ENCODE measurements at regions of chr1 and their contacts with region 1.

Region 1: DNA sequence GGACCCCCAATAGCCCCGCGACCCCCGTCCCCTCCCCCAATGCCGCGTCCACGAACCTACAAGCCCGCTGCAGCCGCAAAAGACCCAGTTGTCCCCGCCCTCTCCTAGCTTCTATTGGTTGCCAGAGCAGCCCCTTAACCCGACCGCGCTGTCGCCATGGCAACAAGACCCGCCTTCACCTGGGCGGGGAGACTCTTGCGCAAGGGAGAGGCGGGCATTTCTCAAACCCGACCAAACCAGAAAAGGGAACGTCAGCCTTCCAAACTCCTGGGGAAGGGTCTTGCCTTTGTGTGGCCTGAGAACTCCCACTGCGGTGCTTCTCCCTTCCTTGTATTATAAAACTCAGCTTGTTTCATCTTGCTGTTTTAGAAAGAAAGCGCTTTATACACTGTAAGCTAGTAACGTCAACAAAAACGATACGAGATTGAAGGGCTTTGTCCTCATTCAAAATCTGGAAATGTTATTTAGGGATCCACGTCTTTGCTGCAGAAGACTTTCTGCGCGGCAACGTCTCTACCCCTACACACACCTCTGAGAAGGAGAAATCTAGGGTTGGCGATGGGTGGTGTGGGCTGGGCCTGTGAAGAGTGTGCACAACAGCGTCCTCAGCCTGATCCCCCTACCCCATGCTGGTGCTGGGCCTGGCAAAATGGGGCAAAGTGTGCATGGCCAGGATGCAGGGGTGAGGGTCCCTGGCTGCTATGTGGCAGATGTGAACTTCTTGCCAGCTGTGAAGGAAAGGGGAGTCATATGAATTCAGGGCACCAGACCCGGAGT is at the start of gene TMEM9:
- DNase-seq: peak; percentile 97 to 100 (median 99)
- ATAC-seq: peak; percentile 97
- H3K4me3 ChIP-seq: peak within 1 kb of the TSS; percentile 84
- H3K4me3 Mint-ChIP-seq: peak within 1 kb of the TSS; percentile 91
- H3K27ac ChIP-seq: peak within 1 kb of the TSS in 1 of 2 donors; percentile 47
- H3K27ac Mint-ChIP-seq: peak within 1 kb of the TSS; percentile 76
- H3K4me1 ChIP-seq: peaks cover 18% of the 10 kb centered on the region
- H3K4me1 Mint-ChIP-seq: peaks cover 32% of the 10 kb centered on the region
- H3K27me3 ChIP-seq: no peaks in the 10 kb centered on the region
- H3K27me3 Mint-ChIP-seq: peaks cover 10% of the 10 kb centered on the region
- CTCF ChIP-seq: no peak
- total RNA-seq, gene TMEM9: 15.7 to 16.5 TPM

Region 2: DNA sequence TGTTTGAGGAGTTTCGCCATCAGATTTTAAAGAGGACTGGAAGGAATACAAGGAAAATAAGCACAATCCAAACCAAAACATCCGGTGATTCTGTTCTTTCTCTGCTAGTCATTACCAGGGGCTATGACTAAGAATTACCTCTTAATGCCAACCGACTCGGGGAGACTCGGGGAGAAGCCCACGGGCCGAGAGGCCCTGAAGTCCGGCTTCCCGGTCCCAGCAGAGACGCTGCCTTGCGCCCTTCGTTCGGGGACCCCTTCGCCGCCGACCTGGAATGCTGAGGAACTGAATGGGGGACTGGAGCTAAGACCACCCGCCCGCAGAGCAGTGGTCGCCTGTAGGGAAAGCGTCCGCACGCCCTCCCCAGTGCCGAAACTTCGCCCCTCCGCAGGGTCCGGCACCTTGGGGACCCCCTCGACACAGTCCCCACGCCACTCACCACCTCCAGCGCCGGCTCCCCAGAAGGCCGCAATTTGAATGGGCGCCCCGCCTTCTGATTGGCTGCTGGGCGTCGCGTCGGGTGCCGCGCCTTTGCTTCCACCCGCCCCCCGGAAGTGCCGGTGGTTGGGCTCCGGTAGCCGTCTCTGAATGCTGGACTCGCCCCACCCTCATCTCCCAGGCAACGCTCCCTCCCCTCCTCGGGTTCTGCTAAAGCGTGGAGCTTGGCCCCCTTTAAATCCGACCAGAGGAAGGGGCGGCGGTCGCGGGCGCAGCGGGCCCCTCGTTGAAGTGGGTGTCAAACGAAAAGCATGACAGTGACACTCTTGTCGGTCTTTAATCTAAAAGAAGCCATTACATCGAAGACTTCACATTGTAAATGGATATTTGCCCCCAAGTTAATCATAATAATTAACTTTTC is 534.1 kb before region 1 on chr1 and contains the start of gene KIF14:
- CTCF ChIA-PET with region 1: no interaction called
- POLR2A ChIA-PET with region 1: no interaction called
- intact Hi-C with region 1: loop called in 1 of 2 experiments (anchors 5 kb)
- DNase-seq: peak; percentile 78 to 95 (median 88)
- ATAC-seq: peak; percentile 95
- H3K4me3 ChIP-seq: peak within 1 kb of the TSS; percentile 83
- H3K4me3 Mint-ChIP-seq: peak within 1 kb of the TSS; percentile 98
- H3K27ac ChIP-seq: peak within 1 kb of the TSS; percentile 23 to 52
- H3K27ac Mint-ChIP-seq: peak within 1 kb of the TSS; percentile 90
- H3K4me1 ChIP-seq: peaks cover 19% of the 10 kb centered on the region
- H3K4me1 Mint-ChIP-seq: peaks cover 31% of the 10 kb centered on the region
- H3K27me3 ChIP-seq: no peaks in the 10 kb centered on the region
- H3K27me3 Mint-ChIP-seq: no peaks in the 10 kb centered on the region
- CTCF ChIP-seq: no peak
- total RNA-seq, gene KIF14: 0.11 TPM

Region 3: DNA sequence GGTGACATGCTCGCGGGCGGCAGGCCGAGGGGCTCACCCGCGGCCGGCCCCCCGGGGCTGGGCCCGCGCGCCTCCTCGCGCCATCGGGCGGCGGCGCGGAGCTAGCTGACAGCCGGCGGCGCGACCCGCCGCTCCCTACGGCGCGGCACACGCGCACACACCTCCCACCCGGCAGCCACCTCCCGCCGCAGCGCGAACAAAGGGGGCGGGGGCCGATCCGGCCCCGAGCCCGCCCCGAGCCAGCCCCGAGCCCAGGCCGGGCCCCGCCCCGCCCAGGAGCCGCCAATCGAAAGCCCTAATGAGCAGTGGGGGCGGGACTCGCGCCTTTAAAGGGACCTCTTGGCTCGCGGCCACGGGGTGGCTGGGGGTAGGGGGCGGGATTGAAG is 131.1 kb before region 1 on chr1 and contains the start of gene KIF21B:
- CTCF ChIA-PET with region 1: no interaction called
- POLR2A ChIA-PET with region 1: interaction called, 3 read pairs
- intact Hi-C with region 1: loop called in 1 of 2 experiments (anchors 5 kb)
- DNase-seq: peak; percentile 79 to 95 (median 90)
- ATAC-seq: peak; percentile 78
- H3K4me3 ChIP-seq: peak within 1 kb of the TSS; percentile 67
- H3K4me3 Mint-ChIP-seq: peak within 1 kb of the TSS; percentile 94
- H3K27ac ChIP-seq: peak within 1 kb of the TSS; percentile 80 to 90
- H3K27ac Mint-ChIP-seq: peak within 1 kb of the TSS; percentile 90
- H3K4me1 ChIP-seq: peaks cover 72% of the 10 kb centered on the region
- H3K4me1 Mint-ChIP-seq: peaks cover 77% of the 10 kb centered on the region
- H3K27me3 ChIP-seq: no peaks in the 10 kb centered on the region
- H3K27me3 Mint-ChIP-seq: no peaks in the 10 kb centered on the region
- CTCF ChIP-seq: no peak
- total RNA-seq, gene KIF21B: 64.5 to 65.4 TPM

Region 4: GRCh38 chr1:201170533-201171062 is 16.0 kb after region 1 on chr1:
- CTCF ChIA-PET with region 1: interaction called, 6 read pairs
- POLR2A ChIA-PET with region 1: interaction called, 12 read pairs
- intact Hi-C with region 1: no loop called
- DNase-seq: peak; percentile 43 to 89 (median 54)
- ATAC-seq: peak; percentile 84
- H3K4me3 ChIP-seq: peak overlapping the region; percentile 61
- H3K4me3 Mint-ChIP-seq: peak overlapping the region; percentile 96
- H3K27ac ChIP-seq: no peak overlapping the region
- H3K27ac Mint-ChIP-seq: peak overlapping the region; percentile 87
- H3K4me1 ChIP-seq: peaks cover 15% of the 10 kb centered on the region
- H3K4me1 Mint-ChIP-seq: peaks cover 23% of the 10 kb centered on the region
- H3K27me3 ChIP-seq: peaks cover 0 to 3% of the 10 kb centered on the region in 2 experiments
- H3K27me3 Mint-ChIP-seq: peaks cover 21% of the 10 kb centered on the region
- CTCF ChIP-seq: no peak

Region 5: GRCh38 chr1:201224666-201225370 is 70.2 kb after region 1 on chr1:
- CTCF ChIA-PET with region 1: interaction called, 6 read pairs
- POLR2A ChIA-PET with region 1: no interaction called
- intact Hi-C with region 1: loop called (anchors 2 to 5 kb)
- DNase-seq: peak in 1 of 14 experiments; percentile 27
- ATAC-seq: no peak
- H3K4me3 ChIP-seq: no peak overlapping the region
- H3K4me3 Mint-ChIP-seq: no peak overlapping the region
- H3K27ac ChIP-seq: no peak overlapping the region
- H3K27ac Mint-ChIP-seq: no peak overlapping the region
- H3K4me1 ChIP-seq: no peaks in the 10 kb centered on the region
- H3K4me1 Mint-ChIP-seq: no peaks in the 10 kb centered on the region
- H3K27me3 ChIP-seq: peaks cover 2 to 11% of the 10 kb centered on the region in 2 experiments
- H3K27me3 Mint-ChIP-seq: peaks cover 13% of the 10 kb centered on the region
- CTCF ChIP-seq: no peak

Region 6: DNA sequence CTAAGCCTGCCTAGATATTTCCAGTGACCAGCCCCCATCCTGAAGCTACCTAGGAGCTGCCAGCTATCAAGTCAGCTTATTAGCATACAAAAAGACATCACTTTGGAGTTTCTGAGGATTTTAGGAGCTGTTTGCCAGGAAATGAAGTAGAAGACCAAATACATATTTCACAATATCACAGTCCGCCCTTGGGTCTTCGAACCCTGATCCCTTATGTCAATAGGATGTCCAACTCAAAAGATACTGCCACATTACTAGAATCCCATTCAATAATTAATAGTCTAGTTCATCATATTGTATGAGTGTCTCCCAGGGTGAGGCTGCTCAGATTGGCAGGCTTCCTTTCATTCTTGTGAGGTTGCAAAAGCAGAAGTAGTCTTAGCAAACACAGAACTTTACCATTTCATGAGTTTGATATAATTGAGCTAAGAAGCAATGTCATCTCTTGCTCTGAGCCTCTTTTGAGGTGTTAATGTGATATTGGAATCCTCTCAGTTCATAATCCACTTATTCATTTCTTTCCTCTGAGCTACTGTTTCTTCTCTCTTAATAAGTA is 688.0 kb after region 1 on chr1:
- CTCF ChIA-PET with region 1: no interaction called
- POLR2A ChIA-PET with region 1: no interaction called
- intact Hi-C with region 1: loop called in 1 of 2 experiments (anchors 10 kb)
- DNase-seq: no peak
- ATAC-seq: no peak
- H3K4me3 ChIP-seq: no peak overlapping the region
- H3K4me3 Mint-ChIP-seq: no peak overlapping the region
- H3K27ac ChIP-seq: no peak overlapping the region
- H3K27ac Mint-ChIP-seq: peak overlapping the region; percentile 43
- H3K4me1 ChIP-seq: no peaks in the 10 kb centered on the region
- H3K4me1 Mint-ChIP-seq: peaks cover 49% of the 10 kb centered on the region
- H3K27me3 ChIP-seq: no peaks in the 10 kb centered on the region
- H3K27me3 Mint-ChIP-seq: no peaks in the 10 kb centered on the region
- CTCF ChIP-seq: no peak

Measured in CD4-positive, alpha-beta T cell (primary cell).